AG04450 (cell line): ENCODE measurements at regions of chr5 and their contacts with region 1.

Region 1: GRCh38 chr5:95969651-95970358 is 8.2 kb upstream of the ELL2 start:
- DNase-seq: peak; percentile 41
- H3K4me3 ChIP-seq: no peak overlapping the region
- H3K27ac ChIP-seq: no peak overlapping the region
- H3K27me3 ChIP-seq: no peaks in the 10 kb centered on the region
- CTCF ChIP-seq: no peak

Region 2: DNA sequence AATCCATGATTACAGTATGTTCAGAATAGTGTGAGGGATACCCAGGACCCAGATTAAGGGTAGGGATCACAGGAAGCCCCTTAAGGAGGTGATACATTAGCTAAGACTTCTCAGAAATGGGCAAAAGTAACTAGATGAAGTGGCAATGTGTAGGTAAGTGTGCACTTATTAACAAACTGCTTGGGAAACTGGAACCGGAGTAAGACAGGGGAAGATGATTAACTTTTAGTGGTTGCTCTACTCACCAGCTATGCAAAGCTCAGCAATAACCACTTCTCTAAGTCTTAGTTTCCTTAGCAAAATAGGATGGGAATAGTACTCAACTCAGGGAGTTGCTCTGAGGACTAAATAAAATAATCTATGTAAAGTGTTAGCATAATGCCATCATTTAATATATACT is 867.1 kb before region 1 on chr5:
- CTCF ChIA-PET with region 1: no interaction called
- POLR2A ChIA-PET with region 1: no interaction called
- DNase-seq: no peak
- H3K4me3 ChIP-seq: no peak overlapping the region
- H3K27ac ChIP-seq: no peak overlapping the region
- H3K27me3 ChIP-seq: no peaks in the 10 kb centered on the region
- CTCF ChIP-seq: no peak

Region 3: DNA sequence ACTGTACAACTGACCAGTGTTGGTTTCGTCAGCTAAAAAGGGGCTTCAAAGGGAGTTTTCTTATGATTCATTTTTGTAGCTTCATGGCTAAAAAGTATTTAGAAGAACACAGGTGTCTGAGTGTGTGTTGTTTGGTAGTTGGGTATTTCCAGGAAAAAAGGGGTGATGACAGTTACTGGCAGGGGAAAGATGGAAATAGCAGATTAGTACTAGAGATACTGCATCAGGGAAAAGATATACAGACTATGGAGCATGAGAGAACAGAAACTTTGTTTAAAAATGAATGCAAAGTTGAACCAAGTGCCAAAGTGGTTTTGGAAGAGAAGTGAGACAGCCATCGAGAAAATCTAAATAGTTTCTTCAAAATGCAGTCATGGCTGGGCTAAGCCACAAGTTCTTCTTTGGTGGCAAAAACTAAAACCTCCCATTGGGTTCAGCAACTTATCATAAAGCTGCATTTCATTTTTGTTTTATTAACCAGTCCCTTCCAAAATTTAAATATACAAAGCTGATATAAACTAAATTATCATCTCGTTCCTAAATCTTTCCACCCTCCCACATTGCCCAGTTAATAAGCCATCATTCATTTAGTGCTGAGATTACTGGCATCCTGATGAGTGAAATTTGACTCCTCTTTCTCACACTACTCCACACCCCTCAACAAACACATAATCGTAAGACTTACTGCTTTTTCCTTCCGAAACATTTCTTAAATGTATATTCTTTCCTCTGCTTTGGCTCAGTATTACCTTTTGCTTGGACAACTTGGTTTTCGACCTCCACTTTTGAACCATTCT is 41.7 kb before region 1 on chr5:
- CTCF ChIA-PET with region 1: no interaction called
- POLR2A ChIA-PET with region 1: no interaction called
- DNase-seq: no peak
- H3K4me3 ChIP-seq: no peak overlapping the region
- H3K27ac ChIP-seq: no peak overlapping the region
- H3K27me3 ChIP-seq: no peaks in the 10 kb centered on the region
- CTCF ChIP-seq: no peak

Region 4: DNA sequence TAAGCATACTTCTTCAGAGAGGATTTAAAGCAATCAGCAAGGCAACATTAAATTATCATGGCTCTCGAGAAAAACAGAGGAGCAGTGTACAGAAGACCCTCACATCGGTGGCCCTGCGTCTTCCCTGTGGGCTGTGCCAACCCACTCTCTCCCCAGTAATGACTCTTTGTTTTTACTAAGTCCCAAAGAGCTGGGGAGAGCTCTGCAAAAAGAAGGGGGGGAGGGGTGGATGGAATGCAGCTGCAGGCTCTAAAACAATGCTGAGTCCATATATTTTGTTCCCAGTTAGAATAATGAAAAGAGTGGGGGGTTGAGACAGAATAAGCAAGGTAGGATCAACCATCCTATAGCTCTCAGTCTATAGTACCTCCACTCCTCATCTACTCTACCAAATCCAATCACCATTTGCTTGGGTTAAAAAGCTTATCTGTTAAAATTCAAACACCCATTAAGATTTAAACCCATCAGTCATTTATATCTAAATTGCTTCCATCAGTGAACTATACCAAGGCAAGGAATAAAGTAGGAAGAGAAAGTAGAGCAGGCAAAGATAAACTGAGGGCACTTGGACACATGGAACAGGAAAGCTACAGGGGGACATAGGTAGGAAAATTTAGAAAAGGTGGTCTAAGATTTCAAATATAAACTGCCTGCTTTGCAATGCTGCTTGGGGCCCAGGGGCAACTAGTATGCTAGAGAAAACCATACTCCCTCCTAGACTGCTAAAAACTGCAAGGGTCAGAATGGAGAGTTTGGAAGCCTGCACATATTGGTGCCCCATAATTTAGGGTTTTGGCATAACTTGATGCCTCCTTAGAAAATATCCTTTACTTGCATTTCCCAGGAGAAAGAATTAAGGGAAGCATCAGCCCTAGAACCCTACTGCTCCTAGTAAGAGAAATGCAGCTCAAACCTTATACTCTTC is 28.8 kb before region 1 on chr5:
- CTCF ChIA-PET with region 1: no interaction called
- POLR2A ChIA-PET with region 1: interaction called, 11 read pairs
- DNase-seq: no peak
- H3K4me3 ChIP-seq: no peak overlapping the region
- H3K27ac ChIP-seq: no peak overlapping the region
- H3K27me3 ChIP-seq: no peaks in the 10 kb centered on the region
- CTCF ChIP-seq: no peak